Psoas muscle (tissue), 8 donors: ENCODE measurements at regions of chr7 and their contacts with region 1.

Region 1: GRCh38 chr7:28135315-28135714 is 45.3 kb downstream of the JAZF1 start:
- DNase-seq: no peak
- ATAC-seq: no peak
- H3K4me3 ChIP-seq: no peak overlapping the region
- H3K27ac ChIP-seq: no peak overlapping the region
- H3K4me1 ChIP-seq: peaks cover 19% of the 10 kb centered on the region
- H3K27me3 ChIP-seq: no peaks in the 10 kb centered on the region
- CTCF ChIP-seq: no peak

Region 2: GRCh38 chr7:29071203-29071874 is 936.0 kb after region 1 on chr7:
- intact Hi-C with region 1: loop called in 1 of 2 experiments (anchors 5 kb)
- DNase-seq: no peak
- ATAC-seq: no peak
- H3K4me3 ChIP-seq: no peak overlapping the region
- H3K27ac ChIP-seq: no peak overlapping the region
- H3K4me1 ChIP-seq: no peaks in the 10 kb centered on the region
- H3K27me3 ChIP-seq: no peaks in the 10 kb centered on the region
- CTCF ChIP-seq: no peak